Activated T-helper 1 cell treated with anti-CD3 and anti-CD28 coated beads, Interleukin-12 subunit alpha, Interleukin-12 subunit beta, Interleukin-2, Interleukin-4 antibody, amounts not matched to agents 30 ng/mL and 10 ng/mL and 1 ng/mL, durations not matched to agents 14 hours and 24 hours and 36 hours (primary cell): ENCODE measurements at regions of chr22 and their contacts with region 1.

Region 1: GRCh38 chr22:28360939-28361338 is 318.7 kb downstream of the TTC28 start:
- DNase-seq: no peak
- H3K4me3 Mint-ChIP-seq: no peak overlapping the region
- H3K27ac Mint-ChIP-seq: peak overlapping the region; percentile 52
- H3K4me1 Mint-ChIP-seq: peaks cover 25% of the 10 kb centered on the region
- H3K27me3 Mint-ChIP-seq: no peaks in the 10 kb centered on the region

Region 2: DNA sequence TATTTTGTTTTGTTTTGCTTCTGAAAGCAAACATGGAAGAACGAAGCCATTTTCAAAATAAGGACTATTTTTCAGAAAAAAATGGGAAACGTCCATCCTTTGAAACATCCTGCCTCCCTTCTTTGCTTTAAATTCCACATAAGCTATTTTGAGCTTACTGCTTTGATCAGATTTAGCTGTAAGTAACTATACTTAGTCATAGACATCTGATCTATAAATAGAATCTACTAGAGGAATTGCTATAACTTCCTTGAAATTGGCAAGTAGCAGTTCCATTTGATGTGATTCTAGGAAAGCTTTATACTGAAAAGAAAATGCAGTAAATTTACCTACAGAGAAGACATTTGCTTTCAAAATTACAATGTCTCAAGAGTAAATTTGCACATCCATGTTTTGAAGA is 12.9 kb after region 1 on chr22:
- intact Hi-C with region 1: loop called (anchors 1 kb)
- DNase-seq: no peak
- H3K4me3 Mint-ChIP-seq: no peak overlapping the region
- H3K27ac Mint-ChIP-seq: peak overlapping the region; percentile 30
- H3K4me1 Mint-ChIP-seq: peaks cover 74% of the 10 kb centered on the region
- H3K27me3 Mint-ChIP-seq: no peaks in the 10 kb centered on the region

Region 3: GRCh38 chr22:28379075-28379779 is 18.3 kb after region 1 on chr22:
- intact Hi-C with region 1: loop called (anchors 1 kb)
- DNase-seq: no peak
- H3K4me3 Mint-ChIP-seq: no peak overlapping the region
- H3K27ac Mint-ChIP-seq: peak overlapping the region; percentile 7
- H3K4me1 Mint-ChIP-seq: peaks cover 47% of the 10 kb centered on the region
- H3K27me3 Mint-ChIP-seq: no peaks in the 10 kb centered on the region

Region 4: DNA sequence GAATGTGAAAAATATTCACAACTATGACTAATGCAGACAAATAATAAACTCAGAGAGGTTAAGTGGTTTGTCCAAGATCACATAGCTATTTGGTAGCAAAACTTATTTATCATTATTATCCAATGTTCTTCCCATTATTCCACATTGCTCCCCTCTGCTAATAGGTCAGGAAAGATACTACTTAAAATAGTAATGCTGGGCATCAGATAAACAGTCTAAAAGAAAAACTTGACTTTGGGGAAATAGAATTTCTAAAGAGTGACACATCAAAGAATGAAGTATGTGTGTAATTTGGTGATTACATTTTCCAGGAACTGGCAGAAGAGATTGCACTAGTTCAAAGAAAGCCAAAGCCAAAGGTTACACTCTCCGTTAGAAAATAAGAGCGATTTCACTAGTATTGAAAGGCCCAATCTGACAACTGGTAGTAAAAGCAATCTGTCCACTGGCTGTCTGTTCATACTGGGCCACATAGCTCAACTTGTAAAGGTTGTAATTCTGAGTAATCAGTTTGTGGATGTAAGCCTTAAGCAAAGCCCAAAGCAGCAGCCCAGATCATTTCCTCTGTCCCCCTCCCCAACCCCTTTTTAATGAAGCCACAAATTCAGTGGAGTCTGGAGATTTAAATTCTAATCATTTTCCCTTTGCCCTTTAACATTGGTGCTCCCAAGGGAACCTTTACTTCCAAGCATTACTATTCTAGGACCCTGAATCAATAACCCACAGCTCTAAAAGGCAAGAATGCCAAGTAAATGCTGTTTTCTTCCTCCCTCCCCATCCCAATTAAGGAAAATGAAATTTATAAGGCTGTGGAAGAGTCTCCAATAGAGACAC is 35.2 kb after region 1 on chr22:
- intact Hi-C with region 1: loop called (anchors 1 kb)
- DNase-seq: no peak
- H3K4me3 Mint-ChIP-seq: peak overlapping the region; percentile 13
- H3K27ac Mint-ChIP-seq: peak overlapping the region; percentile 80
- H3K4me1 Mint-ChIP-seq: peaks cover 47% of the 10 kb centered on the region
- H3K27me3 Mint-ChIP-seq: no peaks in the 10 kb centered on the region

Region 5: DNA sequence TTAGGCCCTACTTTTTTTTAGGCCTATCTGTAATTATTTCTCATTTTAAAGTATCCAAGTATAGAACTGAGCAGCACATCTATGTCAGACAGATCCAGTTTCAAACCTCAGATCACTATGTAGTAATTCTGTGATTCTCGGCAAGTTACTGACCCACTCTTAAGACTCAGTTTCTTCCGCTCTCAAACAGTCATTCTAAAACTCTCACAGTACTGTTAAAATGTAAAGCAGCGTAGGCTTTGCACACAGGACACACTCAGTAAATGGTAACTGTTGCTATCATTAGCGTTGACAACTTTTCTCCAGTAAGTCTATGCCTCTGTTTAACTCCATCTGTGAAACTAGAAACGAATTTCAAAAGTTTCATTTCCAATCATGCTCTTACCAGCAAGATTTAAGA is 41.6 kb after region 1 on chr22:
- intact Hi-C with region 1: loop called (anchors 2 kb)
- DNase-seq: no peak
- H3K4me3 Mint-ChIP-seq: peak overlapping the region; percentile 9
- H3K27ac Mint-ChIP-seq: peak overlapping the region; percentile 74
- H3K4me1 Mint-ChIP-seq: peaks cover 33% of the 10 kb centered on the region
- H3K27me3 Mint-ChIP-seq: no peaks in the 10 kb centered on the region